OCI-LY7 (cell line): ENCODE measurements at regions of chr5 and their contacts with region 1.

Region 1: DNA sequence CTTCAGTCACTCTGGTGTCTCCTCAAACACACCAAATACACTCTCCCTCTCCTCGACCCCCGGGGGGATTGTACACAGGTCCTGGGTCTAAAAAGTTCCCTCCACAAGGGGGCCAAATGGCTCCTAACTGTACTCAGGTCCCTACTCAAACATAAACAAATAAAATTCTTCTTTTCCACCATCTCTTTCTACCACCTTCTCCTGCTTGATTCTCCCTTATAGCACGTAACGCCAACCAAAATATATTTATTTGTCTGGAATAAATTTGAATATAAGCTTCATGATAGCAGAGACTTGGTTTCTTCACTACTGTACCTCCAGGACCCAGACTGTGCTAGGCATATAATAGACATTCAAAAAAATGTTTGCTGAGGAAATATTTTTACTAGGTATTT is 21.4 kb downstream of the ZNF608 start:
- DNase-seq: peak; percentile 83
- H3K4me3 ChIP-seq: peak overlapping the region; percentile 71
- H3K27ac ChIP-seq: peak overlapping the region; percentile 65
- H3K4me1 ChIP-seq: peaks cover 86% of the 10 kb centered on the region
- CTCF ChIP-seq: peak; percentile 85

Region 2: DNA sequence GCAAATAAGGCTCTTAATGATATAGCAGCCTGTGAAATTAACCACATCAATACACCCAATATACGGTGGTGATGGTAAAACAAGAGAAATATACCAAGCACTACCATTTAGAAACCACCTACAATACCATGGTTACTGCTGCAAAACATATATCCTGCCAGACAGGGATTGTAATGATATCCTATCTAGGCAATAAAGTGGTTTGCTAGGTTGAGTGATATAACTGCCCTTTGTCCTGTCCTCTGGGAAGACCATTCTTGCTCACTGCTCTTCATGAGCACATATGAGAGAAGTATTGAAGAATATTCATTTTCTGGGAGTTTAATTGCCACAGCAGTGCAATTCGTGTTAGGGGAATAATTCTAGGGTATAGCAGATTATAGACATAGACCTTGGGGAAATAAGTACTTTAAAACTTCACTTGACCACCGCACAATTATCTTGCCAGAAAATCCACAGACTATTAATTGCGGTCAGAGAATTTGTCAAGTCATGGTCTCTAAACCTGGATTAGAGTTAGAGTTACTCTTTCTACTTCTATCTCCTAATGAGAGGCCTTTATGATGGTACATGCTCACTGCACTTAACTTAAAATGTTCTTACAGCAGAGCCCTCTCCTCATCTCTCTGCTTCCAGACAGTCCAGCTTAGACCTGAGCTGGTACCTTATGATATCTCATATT is 391.6 kb before region 1 on chr5:
- CTCF ChIA-PET with region 1: no interaction called
- POLR2A ChIA-PET with region 1: no interaction called
- intact Hi-C with region 1: no loop called
- DNase-seq: no peak
- H3K4me3 ChIP-seq: no peak overlapping the region
- H3K27ac ChIP-seq: no peak overlapping the region
- H3K4me1 ChIP-seq: no peaks in the 10 kb centered on the region
- CTCF ChIP-seq: no peak

Region 3: GRCh38 chr5:124735169-124735858 is 10.3 kb after region 1 on chr5:
- CTCF ChIA-PET with region 1: interaction called, 3 read pairs
- POLR2A ChIA-PET with region 1: interaction called, 121 read pairs
- intact Hi-C with region 1: no loop called
- DNase-seq: peak; percentile 73
- H3K4me3 ChIP-seq: peak overlapping the region; percentile 85
- H3K27ac ChIP-seq: peak overlapping the region; percentile 97
- H3K4me1 ChIP-seq: peaks cover 96% of the 10 kb centered on the region
- CTCF ChIP-seq: no peak